ENCODE measurements at regions of chr5 and their contacts with region 1.

Region 1: DNA sequence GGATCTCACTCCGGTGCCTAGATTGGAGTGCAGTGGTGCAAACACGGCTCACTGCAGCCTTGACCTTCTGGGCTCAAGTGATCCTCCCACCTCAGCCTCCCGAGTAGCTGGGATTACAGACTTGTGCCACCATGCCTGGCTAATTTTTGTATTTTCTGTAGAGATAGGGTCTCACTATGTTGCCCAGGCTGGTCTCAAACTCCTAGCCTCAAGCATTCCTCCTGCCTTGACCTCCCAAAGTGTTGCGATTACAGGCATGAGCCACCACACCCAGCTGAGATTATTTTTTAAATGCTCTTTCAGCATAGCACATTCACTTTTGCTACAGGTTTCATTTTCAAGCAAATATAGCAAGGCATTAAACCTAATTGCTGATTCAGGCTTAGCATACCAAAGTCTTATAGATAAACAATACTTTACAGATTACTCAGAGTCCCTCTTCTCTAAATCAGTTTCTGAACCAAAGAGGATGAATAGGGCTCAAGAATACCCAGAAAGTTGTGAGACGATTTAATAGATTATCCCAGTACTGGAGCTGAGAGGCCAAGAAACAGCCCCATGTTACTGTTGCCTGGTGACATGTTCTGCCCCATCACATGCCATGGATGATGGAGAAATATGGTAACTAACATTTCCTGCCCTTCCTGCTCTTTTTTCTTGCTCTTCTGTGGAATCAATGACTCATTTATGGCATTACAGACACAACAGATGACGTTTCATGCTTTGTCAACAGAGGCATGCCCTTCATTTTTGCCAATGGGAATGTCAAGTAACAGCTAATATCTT is 18.0 kb upstream of the SSBP2 start:
- DNase-seq: peak; percentile 94
- H3K4me3 ChIP-seq: no peak overlapping the region
- H3K27ac ChIP-seq: peak overlapping the region; percentile 67
- H3K4me1 ChIP-seq: peaks cover 10% of the 10 kb centered on the region
- H3K27me3 ChIP-seq: no peaks in the 10 kb centered on the region
- CTCF ChIP-seq: no peak
- POLR2A ChIP-seq: no peak

Region 2: DNA sequence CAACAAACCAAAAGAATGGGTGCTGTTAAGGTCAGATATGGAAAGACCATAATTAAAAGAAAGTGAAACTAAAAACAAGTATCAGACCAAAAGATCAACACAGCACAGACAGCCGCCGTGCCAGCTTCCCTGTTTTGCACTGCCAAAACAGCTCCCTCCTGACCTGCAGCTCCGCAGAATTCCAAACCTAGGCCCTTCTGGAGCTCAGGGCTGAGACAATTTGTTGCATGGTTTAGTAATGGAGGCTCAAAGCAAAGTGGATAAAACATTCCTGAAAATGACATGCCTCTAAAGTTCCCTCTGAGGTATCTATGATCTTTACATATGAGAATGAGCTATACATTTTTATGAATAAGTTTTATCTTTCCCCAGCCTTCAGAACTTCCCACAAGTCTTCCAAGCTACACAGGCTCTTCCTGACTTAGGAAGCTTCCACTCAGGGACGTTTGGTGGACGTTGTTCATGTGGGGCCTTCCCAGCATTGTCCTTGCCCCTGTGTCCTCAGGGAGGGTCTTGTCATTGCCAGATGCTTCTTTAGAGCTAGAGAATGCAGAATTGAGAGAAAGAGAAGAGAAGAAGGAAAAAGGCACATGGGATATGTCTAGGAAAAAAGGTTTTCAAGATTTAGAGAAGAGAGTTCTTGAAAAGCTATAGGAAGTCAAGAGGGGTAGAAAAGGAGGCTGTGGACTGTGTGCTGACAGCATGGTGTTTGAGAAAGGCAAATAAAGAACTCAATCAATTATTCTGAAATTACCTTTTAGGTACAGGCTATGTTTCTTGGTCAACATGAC is 10.5 kb after region 1 on chr5:
- CTCF ChIA-PET with region 1: interaction called, 5 read pairs
- POLR2A ChIA-PET with region 1: no interaction called
- dilution Hi-C with region 1: no loop called
- intact Hi-C with region 1: loop called (anchors 1 kb)
- DNase-seq: peak; percentile 74
- H3K4me3 ChIP-seq: peak overlapping the region in 2 of 3 experiments; percentile 12 to 52
- H3K27ac ChIP-seq: peak overlapping the region; percentile 41
- H3K4me1 ChIP-seq: peaks cover 11% of the 10 kb centered on the region
- H3K27me3 ChIP-seq: no peaks in the 10 kb centered on the region
- CTCF ChIP-seq: no peak
- POLR2A ChIP-seq: no peak